ENCODE measurements at regions of chr2 and their contacts with region 1.

Region 1: GRCh38 chr2:20635675-20636584 is 15.0 kb downstream of the HS1BP3 start:
- DNase-seq: peak; percentile 84 to 86 (median 85)
- ATAC-seq: peak; percentile 98
- H3K4me3 ChIP-seq: no peak overlapping the region
- H3K27ac ChIP-seq: no peak overlapping the region
- H3K4me1 ChIP-seq: peaks cover 0 to 13% of the 10 kb centered on the region in 2 experiments; a peak in 1 of 5 replicates
- H3K27me3 ChIP-seq: no peaks in the 10 kb centered on the region
- CTCF ChIP-seq: peak; percentile 93 to 98 (median 96)
- EP300 ChIP-seq: no peak
- POLR2A ChIP-seq: no peak
- RAD21 ChIP-seq: peak; percentile 99 to 100

Region 2: DNA sequence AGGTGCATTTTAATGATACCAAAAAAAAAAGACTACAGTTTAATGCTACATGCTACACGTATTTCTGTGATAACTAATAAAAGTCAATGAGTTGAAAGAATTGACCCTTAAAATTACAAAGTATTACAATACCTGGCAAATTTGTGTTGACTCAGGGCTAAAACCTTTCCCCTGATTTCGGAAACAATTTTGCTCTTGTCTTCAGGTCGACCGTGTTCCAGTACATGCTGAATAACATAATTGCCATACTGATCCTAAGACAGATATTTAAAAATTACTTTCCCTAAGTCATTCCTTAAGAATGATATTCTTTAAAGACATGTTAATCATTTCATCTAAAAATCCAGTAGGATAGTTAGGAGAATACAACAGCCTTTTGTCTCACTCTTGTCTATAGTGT is 381.2 kb before region 1 on chr2:
- CTCF ChIA-PET with region 1: no interaction called
- POLR2A ChIA-PET with region 1: no interaction called
- in situ Hi-C with region 1: no loop called
- intact Hi-C with region 1: loop called (anchors 10 kb)
- DNase-seq: no peak
- ATAC-seq: no peak
- H3K4me3 ChIP-seq: no peak overlapping the region
- H3K27ac ChIP-seq: no peak overlapping the region
- H3K4me1 ChIP-seq: no peaks in the 10 kb centered on the region
- H3K27me3 ChIP-seq: no peaks in the 10 kb centered on the region
- CTCF ChIP-seq: no peak
- EP300 ChIP-seq: no peak
- POLR2A ChIP-seq: no peak
- RAD21 ChIP-seq: no peak

Region 3: GRCh38 chr2:20398956-20399567 is 236.9 kb before region 1 on chr2:
- CTCF ChIA-PET with region 1: interaction called, 26 read pairs
- POLR2A ChIA-PET with region 1: no interaction called
- in situ Hi-C with region 1: no loop called
- intact Hi-C with region 1: loop called (anchors 1 kb)
- DNase-seq: no peak
- ATAC-seq: no peak
- H3K4me3 ChIP-seq: no peak overlapping the region
- H3K27ac ChIP-seq: no peak overlapping the region
- H3K4me1 ChIP-seq: no peaks in the 10 kb centered on the region
- H3K27me3 ChIP-seq: peaks cover 16 to 44% of the 10 kb centered on the region in 2 experiments
- CTCF ChIP-seq: no peak
- EP300 ChIP-seq: no peak
- POLR2A ChIP-seq: no peak
- RAD21 ChIP-seq: no peak

Region 4: GRCh38 chr2:20446917-20447436 is 189.0 kb before region 1 on chr2 and contains the start of gene RHOB:
- CTCF ChIA-PET with region 1: interaction called, 54 read pairs
- POLR2A ChIA-PET with region 1: interaction called, 4 read pairs
- in situ Hi-C with region 1: loop called (anchors 5 kb)
- intact Hi-C with region 1: loop called (anchors 1 kb)
- DNase-seq: peak; percentile 86 to 95 (median 94)
- ATAC-seq: peak; percentile 99
- H3K4me3 ChIP-seq: peak within 1 kb of the TSS; percentile 36
- H3K27ac ChIP-seq: peak within 1 kb of the TSS; percentile 56; the same call in 2 of the 3 replicates
- H3K4me1 ChIP-seq: peaks cover 0 to 21% of the 10 kb centered on the region in 2 experiments; a peak in 2 of 5 replicates
- H3K27me3 ChIP-seq: 0 out of 5 replicates have a peak, but pooled peaks cover 0 to 7% of the 10 kb centered on the region in 2 experiments
- CTCF ChIP-seq: no peak
- EP300 ChIP-seq: no peak
- POLR2A ChIP-seq: peak; percentile 72
- RAD21 ChIP-seq: no peak
- polyA plus RNA-seq, gene RHOB: 0.07 to 0.17 TPM

Region 5: DNA sequence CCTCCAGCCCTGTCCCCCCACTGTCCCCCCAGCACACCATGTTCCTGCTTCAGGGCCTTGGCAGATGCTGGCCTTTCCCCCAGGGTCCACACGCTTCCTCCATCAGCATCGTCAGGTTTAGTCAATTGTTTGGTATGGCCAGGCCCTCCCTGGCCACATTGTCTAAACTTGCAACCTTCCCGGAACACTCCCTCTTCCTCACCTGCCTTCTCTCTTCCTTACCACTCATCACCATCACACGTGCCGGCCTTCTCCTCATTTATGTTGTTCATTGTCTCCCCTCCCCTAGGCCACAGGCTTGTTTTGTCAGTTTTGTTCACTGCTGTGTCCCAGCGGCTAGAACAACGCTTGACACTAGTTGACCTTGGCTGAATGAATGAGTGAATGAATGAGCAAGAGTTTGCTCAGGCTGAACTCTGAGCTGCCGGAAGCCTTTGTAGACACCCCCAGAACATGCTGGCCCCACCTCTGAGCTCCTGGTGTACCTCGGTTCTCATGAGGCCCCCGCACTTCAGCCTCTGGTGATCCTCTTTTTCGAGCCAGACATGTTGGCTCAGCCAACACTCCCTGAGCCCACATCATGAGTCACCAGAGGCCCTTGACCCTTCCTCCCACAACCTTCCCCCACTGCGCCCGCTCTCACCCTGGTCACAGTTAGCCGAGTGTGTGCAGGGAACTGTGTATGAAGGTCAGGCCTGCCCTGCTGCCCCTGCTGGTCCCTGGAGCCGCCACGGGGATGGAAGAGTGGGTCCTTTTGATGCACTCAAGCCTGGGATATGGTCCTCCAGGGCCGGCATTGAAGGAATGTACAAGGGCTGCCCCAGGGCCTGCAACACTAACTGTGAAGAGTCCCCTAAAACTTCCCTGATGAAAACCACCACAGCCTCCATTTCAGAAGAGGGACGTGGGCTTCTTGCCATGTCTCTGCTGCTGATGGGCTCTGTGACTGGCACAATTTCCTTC is 42.6 kb before region 1 on chr2:
- CTCF ChIA-PET with region 1: no interaction called
- POLR2A ChIA-PET with region 1: no interaction called
- in situ Hi-C with region 1: no loop called
- intact Hi-C with region 1: no loop called
- DNase-seq: peak; percentile 83 to 89 (median 87)
- ATAC-seq: peak; percentile 78
- H3K4me3 ChIP-seq: no peak overlapping the region
- H3K27ac ChIP-seq: peak overlapping the region; percentile 80
- H3K4me1 ChIP-seq: peaks cover 38 to 61% of the 10 kb centered on the region in 2 experiments
- H3K27me3 ChIP-seq: no peaks in the 10 kb centered on the region
- CTCF ChIP-seq: no peak
- EP300 ChIP-seq: peak; percentile 26; the same call in 1 of the 2 replicates
- POLR2A ChIP-seq: no peak
- RAD21 ChIP-seq: peak in 1 of 2 experiments; percentile 29; a peak in 1 of 4 replicates